Activated CD4-positive, alpha-beta T cell treated with anti-CD3 and anti-CD28 coated beads for 36 hours (primary cell): ENCODE measurements at regions of chr21 and their contacts with region 1.

Region 1: DNA sequence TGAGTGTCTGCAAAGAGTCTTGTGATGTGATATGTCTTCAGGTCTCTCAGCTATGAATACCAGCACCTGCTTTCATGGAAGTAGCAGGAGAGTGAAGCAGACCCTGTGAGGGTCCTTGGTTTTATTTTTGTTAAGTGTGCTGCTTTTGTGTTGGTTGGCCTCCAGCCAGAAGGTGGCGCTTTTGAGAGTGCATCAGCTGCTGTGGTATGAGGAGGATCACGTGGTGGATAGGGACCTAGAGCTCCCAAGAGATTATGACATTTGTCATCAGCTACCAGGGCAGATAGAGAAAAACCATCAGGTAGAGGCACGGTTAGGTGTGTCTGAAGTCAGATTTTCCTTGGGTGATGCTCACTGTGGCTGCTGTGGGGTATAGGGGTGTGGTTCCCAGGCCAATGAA is 1232.1 kb downstream of the MRPL39 start:
- DNase-seq: peak; percentile 49
- ATAC-seq: peak; percentile 36
- H3K4me3 Mint-ChIP-seq: no peak overlapping the region
- H3K27ac Mint-ChIP-seq: no peak overlapping the region
- H3K4me1 Mint-ChIP-seq: no peaks in the 10 kb centered on the region
- H3K27me3 Mint-ChIP-seq: no peaks in the 10 kb centered on the region

Region 2: DNA sequence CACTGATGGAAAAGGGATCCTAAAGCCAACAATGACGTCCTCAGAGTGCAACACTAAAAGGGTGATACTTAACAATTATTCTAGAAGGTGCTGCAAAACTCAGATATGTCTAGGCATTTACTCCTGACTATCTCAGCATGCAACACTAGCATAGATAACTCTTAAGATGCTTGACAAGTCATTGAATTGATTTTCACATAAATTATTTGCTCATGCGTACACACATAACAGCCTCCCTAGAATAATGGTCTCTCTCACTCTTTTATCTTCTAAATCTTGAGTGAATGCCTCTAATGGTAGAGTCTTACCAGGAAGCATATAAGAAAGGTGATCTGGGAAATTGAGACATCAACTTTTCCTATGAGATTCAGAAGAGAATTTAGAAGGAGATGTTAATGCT is 51.7 kb before region 1 on chr21:
- CTCF ChIA-PET with region 1: no interaction called
- POLR2A ChIA-PET with region 1: no interaction called
- intact Hi-C with region 1: loop called in 1 of 2 experiments (anchors 10 kb)
- DNase-seq: no peak
- ATAC-seq: no peak
- H3K4me3 Mint-ChIP-seq: no peak overlapping the region
- H3K27ac Mint-ChIP-seq: no peak overlapping the region
- H3K4me1 Mint-ChIP-seq: no peaks in the 10 kb centered on the region
- H3K27me3 Mint-ChIP-seq: no peaks in the 10 kb centered on the region

Region 3: GRCh38 chr21:24420689-24421088 is 45.5 kb after region 1 on chr21:
- CTCF ChIA-PET with region 1: no interaction called
- POLR2A ChIA-PET with region 1: no interaction called
- intact Hi-C with region 1: no loop called
- DNase-seq: no peak
- ATAC-seq: no peak
- H3K4me3 Mint-ChIP-seq: no peak overlapping the region
- H3K27ac Mint-ChIP-seq: no peak overlapping the region
- H3K4me1 Mint-ChIP-seq: no peaks in the 10 kb centered on the region
- H3K27me3 Mint-ChIP-seq: peaks cover 1% of the 10 kb centered on the region